Left cardiac atrium (tissue), 4 donors: ENCODE measurements at regions of chr1 and their contacts with region 1.

Region 1: DNA sequence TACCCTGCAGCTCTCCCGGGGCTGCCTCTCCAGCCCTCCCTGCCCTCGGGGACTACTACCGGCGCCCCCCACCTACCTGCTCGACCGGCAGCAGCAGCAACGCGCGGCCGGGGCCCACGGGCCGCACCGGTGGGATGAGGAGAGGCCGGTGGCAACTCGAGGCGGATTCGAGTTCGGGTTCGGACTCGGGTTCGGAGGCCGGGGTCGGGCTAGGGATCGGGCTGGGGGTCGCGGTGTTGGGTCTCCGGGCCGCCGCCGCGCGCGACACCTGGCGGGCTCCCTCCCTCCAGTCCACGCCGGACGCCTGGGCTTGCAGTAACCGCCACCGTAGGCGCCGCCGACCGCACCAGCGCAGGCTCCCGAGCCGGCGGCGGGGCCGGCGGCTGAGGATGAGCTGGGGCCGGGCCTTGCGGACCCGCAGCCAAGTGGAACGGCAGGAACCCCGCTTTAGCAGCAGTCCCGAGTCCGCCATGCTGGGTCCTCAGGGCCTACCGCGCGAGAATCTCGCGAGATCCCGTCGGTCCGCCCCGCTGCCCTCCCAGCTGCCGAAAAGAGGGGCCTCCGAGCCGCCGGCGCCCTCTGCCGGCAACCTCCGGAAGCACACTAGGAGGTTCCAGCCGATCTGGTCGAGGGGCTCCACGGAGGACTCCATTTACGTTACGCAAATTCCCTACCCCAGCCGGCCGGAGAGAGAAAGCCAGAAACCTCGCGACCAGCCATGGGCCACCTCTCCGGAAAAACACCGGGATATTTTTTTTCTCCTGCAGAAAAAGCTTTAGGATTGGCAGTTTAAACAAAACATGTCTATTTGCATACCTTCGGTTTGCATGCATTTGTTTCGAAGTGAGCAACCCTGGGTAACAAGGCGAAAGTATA is at the start of gene NOL9:
- DNase-seq: peak; percentile 96
- ATAC-seq: peak; percentile 97 to 98
- total RNA-seq, gene NOL9: 12.0 to 16.5 TPM

Region 2: DNA sequence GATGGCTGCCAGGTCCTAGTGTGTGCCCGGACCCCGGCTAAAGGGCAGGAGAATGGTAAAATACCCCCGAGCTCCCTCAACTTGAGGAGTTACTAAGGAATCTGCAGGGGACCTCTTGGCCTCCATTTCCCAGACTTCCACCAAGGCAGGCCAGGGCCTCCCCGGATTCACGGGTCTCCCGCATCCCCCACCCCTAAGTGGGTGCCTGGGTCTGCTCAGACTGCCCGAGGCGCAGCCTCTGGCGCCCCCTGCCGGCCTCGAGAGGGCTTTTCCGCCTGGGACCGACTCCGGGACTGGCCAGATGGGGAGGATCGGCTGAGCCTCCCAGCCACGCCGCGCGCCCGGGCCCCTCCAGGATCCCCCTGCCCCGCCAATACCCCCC is 64.5 kb before region 1 on chr1:
- intact Hi-C with region 1: loop called in 1 of 2 experiments (anchors 5 kb)
- DNase-seq: peak; percentile 77
- ATAC-seq: peak; percentile 71 to 77

Region 3: GRCh38 chr1:6579374-6580118 is 25.3 kb after region 1 on chr1 and contains the start of gene ZBTB48:
- intact Hi-C with region 1: loop called in 1 of 2 experiments (anchors 2 kb)
- DNase-seq: peak; percentile 100
- ATAC-seq: peak; percentile 98 to 99
- total RNA-seq, gene ZBTB48: 11.5 to 14.3 TPM

Region 4: GRCh38 chr1:6591222-6591621 is 37.0 kb after region 1 on chr1:
- intact Hi-C with region 1: no loop called
- DNase-seq: no peak
- ATAC-seq: peak; percentile 9 to 28

Region 5: GRCh38 chr1:6646499-6647148 is 92.4 kb after region 1 on chr1:
- intact Hi-C with region 1: loop called in 1 of 2 experiments (anchors 5 kb)
- DNase-seq: peak; percentile 17
- ATAC-seq: peak; percentile 39 to 51

Region 6: DNA sequence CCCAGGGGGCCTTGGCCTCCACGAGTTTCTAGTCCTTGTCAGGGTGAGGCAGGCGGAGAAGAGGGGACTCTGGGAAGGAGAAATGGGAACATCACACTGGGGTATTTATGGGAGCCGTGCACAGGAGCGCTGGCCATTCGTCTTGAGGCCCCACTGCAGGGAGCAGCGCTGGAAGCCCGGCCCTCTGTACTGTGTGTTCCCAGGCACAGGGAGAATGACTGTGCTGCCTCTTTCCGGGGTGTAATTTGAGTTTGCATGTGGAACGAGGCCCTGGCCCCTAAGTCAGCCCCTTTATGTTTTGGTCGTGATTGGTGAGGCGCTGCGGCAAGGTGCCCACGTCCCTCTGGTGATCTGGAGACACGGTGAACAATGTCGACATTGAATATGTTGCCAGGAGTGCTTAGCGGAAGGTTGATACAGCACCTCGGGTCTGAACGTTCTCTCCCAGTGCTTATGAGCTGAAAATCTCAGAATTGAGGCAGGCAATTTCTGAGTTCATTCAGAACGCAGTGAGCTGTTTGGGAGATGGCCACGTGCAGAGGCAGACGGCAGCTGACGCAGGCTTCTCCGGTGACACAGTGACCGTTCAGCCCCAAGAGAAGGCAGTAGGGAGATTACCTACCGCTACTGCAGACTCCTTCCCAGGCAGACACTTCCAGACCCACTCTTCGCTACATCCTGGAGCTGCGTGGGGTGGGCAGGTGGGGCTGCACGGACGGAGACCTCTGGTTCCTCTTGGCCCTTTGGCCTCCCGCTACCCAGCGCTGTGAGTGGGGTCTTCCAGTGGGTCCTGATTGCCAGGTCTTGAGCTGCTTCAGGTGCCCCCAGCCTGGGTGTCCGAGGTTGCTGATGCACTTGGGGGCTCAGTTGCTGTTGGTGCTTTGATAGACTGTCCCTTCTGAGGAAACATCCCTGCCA is 496.7 kb after region 1 on chr1:
- intact Hi-C with region 1: no loop called
- DNase-seq: no peak
- ATAC-seq: no peak